Naive thymus-derived CD4-positive, alpha-beta T cell (primary cell): ENCODE measurements at regions of chr11 and their contacts with region 1.

Region 1: GRCh38 chr11:57657194-57658022 is at the start of gene CLP1:
- DNase-seq: peak; percentile 87 to 99 (median 98)
- ATAC-seq: peak; percentile 99
- H3K4me3 ChIP-seq: peak within 1 kb of the TSS; percentile 64
- H3K4me3 Mint-ChIP-seq: peak within 1 kb of the TSS; percentile 89 to 100 (median 94)
- H3K27ac ChIP-seq: peak within 1 kb of the TSS; percentile 92
- H3K27ac Mint-ChIP-seq: peak within 1 kb of the TSS; percentile 88 to 98 (median 94)
- H3K4me1 ChIP-seq: peaks cover 4 to 10% of the 10 kb centered on the region in 2 donors
- H3K4me1 Mint-ChIP-seq: peaks cover 8 to 45% (median 36%) of the 10 kb centered on the region in 7 donors
- H3K27me3 ChIP-seq: no peaks in the 10 kb centered on the region
- H3K27me3 Mint-ChIP-seq: no peaks in the 10 kb centered on the region
- total RNA-seq, gene CLP1: 12.8 to 18.5 (median 14.7) TPM

Region 2: DNA sequence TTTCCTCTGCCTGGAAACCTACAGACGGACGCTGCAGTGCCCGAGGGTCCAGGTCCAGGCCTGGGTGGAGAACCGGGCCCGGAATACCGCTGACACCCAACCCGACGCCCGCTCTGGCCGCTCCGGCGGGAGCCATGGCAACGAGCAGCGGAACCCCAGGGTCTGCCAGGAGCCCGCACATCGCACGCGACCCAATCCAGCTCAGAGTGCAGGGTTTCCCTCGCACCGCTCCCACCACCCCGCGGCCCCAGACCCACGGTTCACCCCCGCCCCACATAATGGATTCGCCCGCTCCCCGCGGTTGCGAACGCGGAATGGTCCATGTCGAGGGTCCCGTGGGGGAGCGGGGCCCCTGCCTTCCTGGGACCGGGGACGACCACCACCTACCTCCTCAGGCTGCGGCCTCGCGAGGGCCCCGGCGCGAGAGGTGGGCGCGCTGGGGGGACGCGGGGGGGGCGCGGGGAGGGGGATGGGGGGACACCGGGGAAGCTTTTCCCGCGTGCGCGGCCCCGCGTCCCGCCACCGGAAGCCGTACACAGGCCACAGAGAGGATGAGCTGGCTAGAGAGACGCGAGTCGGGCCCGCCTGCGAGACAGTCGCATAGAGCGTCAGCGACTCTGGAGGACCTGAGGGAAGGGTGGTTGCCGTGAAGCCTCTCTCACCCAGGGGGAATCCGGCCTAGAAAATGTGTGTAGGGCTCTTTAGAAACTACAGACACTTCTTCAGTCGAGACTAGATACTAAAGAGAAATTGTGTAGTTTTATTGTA is 321.9 kb before region 1 on chr11 and contains the start of gene SSRP1:
- CTCF ChIA-PET with region 1: no interaction called
- POLR2A ChIA-PET with region 1: no interaction called
- intact Hi-C with region 1: loop called (anchors 1 to 2 kb)
- DNase-seq: peak; percentile 64 to 90 (median 85)
- ATAC-seq: peak; percentile 99
- H3K4me3 ChIP-seq: peak within 1 kb of the TSS; percentile 77
- H3K4me3 Mint-ChIP-seq: peak within 1 kb of the TSS; percentile 91 to 98 (median 96)
- H3K27ac ChIP-seq: peak within 1 kb of the TSS; percentile 91
- H3K27ac Mint-ChIP-seq: peak within 1 kb of the TSS; percentile 96 to 100 (median 99)
- H3K4me1 ChIP-seq: peaks cover 15 to 19% of the 10 kb centered on the region in 2 donors
- H3K4me1 Mint-ChIP-seq: peaks cover 18 to 44% (median 35%) of the 10 kb centered on the region in 7 donors
- H3K27me3 ChIP-seq: no peaks in the 10 kb centered on the region
- H3K27me3 Mint-ChIP-seq: peaks cover 0 to 2% (median 0%) of the 10 kb centered on the region in 5 donors
- total RNA-seq, gene SSRP1: 46.9 to 146 (median 70.1) TPM

Region 3: GRCh38 chr11:57644748-57645688 is 12.4 kb before region 1 on chr11:
- CTCF ChIA-PET with region 1: interaction called, 5 read pairs
- POLR2A ChIA-PET with region 1: interaction called, 5 read pairs
- intact Hi-C with region 1: loop called (anchors 1 kb)
- DNase-seq: peak; percentile 61 to 91 (median 85)
- ATAC-seq: peak; percentile 87
- H3K4me3 ChIP-seq: no peak overlapping the region
- H3K4me3 Mint-ChIP-seq: no peak overlapping the region
- H3K27ac ChIP-seq: no peak overlapping the region
- H3K27ac Mint-ChIP-seq: peak overlapping the region in 2 of 9 donors; percentile 36 to 56
- H3K4me1 ChIP-seq: peaks cover 11 to 14% of the 10 kb centered on the region in 2 donors
- H3K4me1 Mint-ChIP-seq: peaks cover 25 to 60% (median 41%) of the 10 kb centered on the region in 7 donors
- H3K27me3 ChIP-seq: peaks cover 10 to 18% of the 10 kb centered on the region in 2 donors
- H3K27me3 Mint-ChIP-seq: peaks cover 30 to 60% (median 47%) of the 10 kb centered on the region in 5 donors

Region 4: DNA sequence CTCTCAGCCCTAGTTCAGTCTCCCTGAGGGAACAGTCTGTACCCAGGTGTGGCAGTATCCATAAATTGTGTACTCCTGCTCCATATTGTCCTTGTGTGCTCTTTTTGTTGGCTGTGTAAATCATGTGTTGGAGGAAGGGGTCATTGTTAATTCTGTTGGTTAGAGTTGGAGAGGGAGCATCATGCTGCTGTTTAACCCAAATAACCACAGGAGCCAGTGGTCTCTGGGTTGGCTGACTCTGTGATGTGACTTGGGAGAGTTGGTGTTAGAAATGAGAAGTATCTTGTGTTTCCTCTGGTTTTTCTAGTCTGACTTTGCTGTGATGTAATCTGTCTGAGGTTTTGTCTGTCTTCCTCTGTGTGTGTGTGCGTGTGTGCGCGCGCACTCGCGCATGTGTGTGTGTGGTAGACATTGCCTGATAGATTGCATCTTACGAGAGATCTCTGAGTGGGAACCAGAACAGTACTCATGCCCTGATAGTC is 134.7 kb after region 1 on chr11:
- CTCF ChIA-PET with region 1: no interaction called
- POLR2A ChIA-PET with region 1: no interaction called
- intact Hi-C with region 1: loop called in 1 of 2 experiments (anchors 1 kb)
- DNase-seq: peak; percentile 69 to 93 (median 90)
- ATAC-seq: peak; percentile 96
- H3K4me3 ChIP-seq: peak overlapping the region; percentile 15
- H3K4me3 Mint-ChIP-seq: peak overlapping the region; percentile 55 to 88 (median 77)
- H3K27ac ChIP-seq: peak overlapping the region; percentile 83
- H3K27ac Mint-ChIP-seq: peak overlapping the region; percentile 90 to 99 (median 99)
- H3K4me1 ChIP-seq: peaks cover 21 to 29% of the 10 kb centered on the region in 2 donors
- H3K4me1 Mint-ChIP-seq: peaks cover 37 to 53% (median 44%) of the 10 kb centered on the region in 7 donors
- H3K27me3 ChIP-seq: no peaks in the 10 kb centered on the region
- H3K27me3 Mint-ChIP-seq: peaks cover 0 to 2% (median 0%) of the 10 kb centered on the region in 5 donors

Region 5: DNA sequence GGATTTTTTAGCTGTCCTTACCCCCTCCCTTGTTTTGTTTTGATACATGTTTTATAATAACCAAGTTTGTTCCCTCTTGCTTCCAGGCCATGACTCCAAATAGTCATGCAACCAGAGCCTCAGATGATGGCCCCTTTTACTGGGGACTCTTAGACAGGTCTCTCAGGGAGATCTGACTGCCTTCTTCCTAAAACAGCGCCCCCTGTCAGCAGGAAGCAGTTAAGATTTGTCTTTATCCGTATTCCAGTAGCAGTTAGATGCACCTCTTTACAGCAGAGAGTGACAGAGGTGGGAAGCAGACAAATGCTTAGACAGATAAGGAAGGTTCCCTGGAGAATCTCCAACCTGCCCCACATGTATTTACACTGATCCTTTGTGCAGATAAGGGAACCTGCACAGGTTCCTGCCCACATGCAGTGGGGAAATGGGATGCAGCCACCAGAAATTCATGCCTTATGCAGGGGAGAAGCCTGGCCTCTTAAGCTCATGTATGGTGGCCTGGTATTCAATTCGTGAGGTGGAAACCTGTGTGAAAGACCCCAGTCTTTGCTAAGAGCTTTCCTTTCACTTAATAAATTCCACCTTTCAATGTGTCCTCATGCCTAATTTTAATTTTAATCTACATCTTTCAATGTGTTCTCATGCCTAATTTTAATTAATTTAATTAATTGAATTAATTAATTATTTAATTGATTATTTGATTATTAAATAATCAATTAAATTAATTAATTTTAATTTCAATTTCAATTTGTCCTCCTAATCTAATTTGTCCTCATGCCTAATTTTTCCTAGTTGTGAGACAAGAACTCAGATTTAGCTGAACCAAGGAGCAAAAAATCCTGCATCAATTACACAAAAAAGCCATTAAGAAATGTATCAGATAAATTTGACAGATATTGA is 1085.8 kb after region 1 on chr11:
- CTCF ChIA-PET with region 1: no interaction called
- POLR2A ChIA-PET with region 1: no interaction called
- intact Hi-C with region 1: no loop called
- DNase-seq: no peak
- ATAC-seq: no peak
- H3K4me3 ChIP-seq: no peak overlapping the region
- H3K4me3 Mint-ChIP-seq: peak overlapping the region in 1 of 10 donors; percentile 5
- H3K27ac ChIP-seq: no peak overlapping the region
- H3K27ac Mint-ChIP-seq: peak overlapping the region in 2 of 9 donors; percentile 22 to 44
- H3K4me1 ChIP-seq: no peaks in the 10 kb centered on the region
- H3K4me1 Mint-ChIP-seq: peaks cover 2 to 19% (median 10%) of the 10 kb centered on the region in 7 donors
- H3K27me3 ChIP-seq: no peaks in the 10 kb centered on the region
- H3K27me3 Mint-ChIP-seq: peaks cover 0 to 5% (median 0%) of the 10 kb centered on the region in 5 donors

Region 6: GRCh38 chr11:59550368-59550841 is 1893.0 kb after region 1 on chr11:
- CTCF ChIA-PET with region 1: no interaction called
- POLR2A ChIA-PET with region 1: no interaction called
- intact Hi-C with region 1: loop called in 1 of 2 experiments (anchors 1 kb)
- DNase-seq: peak; percentile 67 to 95 (median 89)
- ATAC-seq: peak; percentile 92
- H3K4me3 ChIP-seq: peak overlapping the region; percentile 59
- H3K4me3 Mint-ChIP-seq: peak overlapping the region; percentile 70 to 98 (median 92)
- H3K27ac ChIP-seq: peak overlapping the region; percentile 66
- H3K27ac Mint-ChIP-seq: peak overlapping the region; percentile 89 to 100 (median 98)
- H3K4me1 ChIP-seq: peaks cover under 1 to 4% of the 10 kb centered on the region in 2 donors
- H3K4me1 Mint-ChIP-seq: peaks cover 0 to 40% (median 32%) of the 10 kb centered on the region in 7 donors
- H3K27me3 ChIP-seq: no peaks in the 10 kb centered on the region
- H3K27me3 Mint-ChIP-seq: peaks cover 0 to 28% (median 0%) of the 10 kb centered on the region in 5 donors